ENCODE measurements at regions of chr4 and their contacts with region 1.

Region 1: DNA sequence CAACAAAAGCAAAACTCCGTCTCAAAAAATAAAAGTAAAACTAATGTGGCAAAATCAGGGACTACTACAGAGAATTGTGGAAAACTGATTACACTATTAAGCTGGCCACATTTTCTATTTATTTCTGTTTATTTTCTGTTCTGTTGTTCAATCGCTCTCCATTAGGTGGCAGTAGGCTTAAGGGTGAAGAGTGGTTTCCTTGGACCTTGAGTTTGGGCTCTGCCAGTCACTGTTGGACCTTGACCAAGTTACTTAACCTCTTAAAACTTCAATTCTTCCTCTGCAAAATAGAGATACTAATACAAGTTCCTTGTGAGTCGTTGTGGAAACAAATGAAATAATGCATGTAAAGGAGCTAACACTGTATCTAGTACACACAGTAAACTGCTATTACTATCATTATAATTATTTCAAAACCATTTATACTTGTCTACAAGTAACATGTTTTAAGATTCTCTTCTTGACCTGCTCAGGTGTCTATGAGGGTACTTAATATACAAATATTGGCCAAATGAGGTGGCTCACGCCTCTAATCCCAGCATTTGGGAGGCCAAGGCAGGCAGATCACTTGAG is 15.2 kb downstream of the HSD17B11 start:
- DNase-seq: no peak
- ATAC-seq: peak; percentile 60
- H3K4me3 Mint-ChIP-seq: no peak overlapping the region
- H3K27ac Mint-ChIP-seq: no peak overlapping the region
- H3K4me1 Mint-ChIP-seq: no peaks in the 10 kb centered on the region
- H3K27me3 Mint-ChIP-seq: no peaks in the 10 kb centered on the region
- CTCF ChIP-seq: peak; percentile 61

Region 2: GRCh38 chr4:87353592-87353991 is 22.2 kb before region 1 on chr4:
- CTCF ChIA-PET with region 1: interaction called, 10 read pairs
- POLR2A ChIA-PET with region 1: no interaction called
- intact Hi-C with region 1: no loop called
- DNase-seq: peak; percentile 55
- ATAC-seq: peak; percentile 49
- H3K4me3 Mint-ChIP-seq: no peak overlapping the region
- H3K27ac Mint-ChIP-seq: no peak overlapping the region
- H3K4me1 Mint-ChIP-seq: no peaks in the 10 kb centered on the region
- H3K27me3 Mint-ChIP-seq: no peaks in the 10 kb centered on the region
- CTCF ChIP-seq: peak; percentile 67

Region 3: DNA sequence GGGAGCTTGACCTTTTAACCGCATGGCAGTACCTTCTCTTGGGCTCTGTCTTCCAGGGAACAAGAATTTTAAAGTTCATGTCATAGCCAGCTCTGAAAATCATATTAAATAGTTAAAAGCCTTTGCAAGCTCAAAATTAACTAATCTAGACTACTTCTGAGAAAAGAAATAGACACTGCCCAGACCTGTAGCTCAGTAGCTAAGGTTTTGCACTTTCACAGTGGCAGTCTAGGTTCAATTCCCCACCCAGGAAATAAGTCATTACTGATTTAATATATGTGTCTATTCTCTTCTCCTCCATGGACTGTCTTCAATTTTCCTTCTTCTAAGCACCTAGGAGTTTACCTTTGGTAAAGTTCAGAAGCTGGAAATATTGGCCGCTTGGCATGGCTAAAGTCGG is 12.2 kb before region 1 on chr4:
- CTCF ChIA-PET with region 1: interaction called, 14 read pairs
- POLR2A ChIA-PET with region 1: no interaction called
- intact Hi-C with region 1: no loop called
- DNase-seq: no peak
- ATAC-seq: no peak
- H3K4me3 Mint-ChIP-seq: no peak overlapping the region
- H3K27ac Mint-ChIP-seq: no peak overlapping the region
- H3K4me1 Mint-ChIP-seq: no peaks in the 10 kb centered on the region
- H3K27me3 Mint-ChIP-seq: no peaks in the 10 kb centered on the region
- CTCF ChIP-seq: no peak

Region 4: DNA sequence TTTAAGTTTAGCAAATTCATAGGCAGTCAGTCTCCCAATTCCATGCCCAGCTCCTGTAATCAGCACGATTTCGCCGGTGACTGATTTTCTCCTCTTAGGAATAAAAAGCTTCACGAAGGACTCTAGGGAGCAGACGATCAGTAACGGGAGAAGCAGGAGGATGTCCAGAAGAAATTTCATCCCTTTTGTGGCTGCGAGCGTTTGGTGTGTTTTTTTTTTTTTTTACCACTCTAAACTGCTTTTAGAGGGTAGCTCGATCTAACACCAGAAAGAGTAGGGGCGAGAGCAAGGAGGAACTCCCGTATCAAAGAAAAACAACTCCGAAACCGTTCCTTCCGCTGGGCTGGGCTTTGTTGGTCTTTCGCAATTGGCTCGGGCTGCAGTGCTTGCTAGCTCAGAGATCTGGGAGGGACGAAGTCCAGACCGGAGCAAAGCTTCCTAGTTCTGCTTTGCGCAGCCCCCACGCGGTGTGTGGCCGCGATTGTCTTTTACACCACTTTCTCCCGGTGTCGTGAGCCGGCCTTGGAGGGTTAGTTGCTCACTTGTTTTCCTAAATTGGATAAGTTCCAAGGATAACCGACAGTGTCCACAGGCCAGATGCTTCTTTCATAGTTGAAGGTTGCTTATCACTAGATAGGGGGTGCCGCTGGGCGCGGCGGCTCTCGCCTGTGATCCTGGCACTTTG is 15.2 kb after region 1 on chr4 and contains the start of gene HSD17B11:
- CTCF ChIA-PET with region 1: interaction called, 17 read pairs
- POLR2A ChIA-PET with region 1: interaction called, 4 read pairs
- intact Hi-C with region 1: no loop called
- DNase-seq: peak; percentile 89
- ATAC-seq: peak; percentile 96
- H3K4me3 Mint-ChIP-seq: peak within 1 kb of the TSS; percentile 87
- H3K27ac Mint-ChIP-seq: peak within 1 kb of the TSS; percentile 89
- H3K4me1 Mint-ChIP-seq: peaks cover 47% of the 10 kb centered on the region
- H3K27me3 Mint-ChIP-seq: no peaks in the 10 kb centered on the region
- CTCF ChIP-seq: no peak
- total RNA-seq, gene HSD17B11: 21.2 to 21.7 TPM

Region 5: DNA sequence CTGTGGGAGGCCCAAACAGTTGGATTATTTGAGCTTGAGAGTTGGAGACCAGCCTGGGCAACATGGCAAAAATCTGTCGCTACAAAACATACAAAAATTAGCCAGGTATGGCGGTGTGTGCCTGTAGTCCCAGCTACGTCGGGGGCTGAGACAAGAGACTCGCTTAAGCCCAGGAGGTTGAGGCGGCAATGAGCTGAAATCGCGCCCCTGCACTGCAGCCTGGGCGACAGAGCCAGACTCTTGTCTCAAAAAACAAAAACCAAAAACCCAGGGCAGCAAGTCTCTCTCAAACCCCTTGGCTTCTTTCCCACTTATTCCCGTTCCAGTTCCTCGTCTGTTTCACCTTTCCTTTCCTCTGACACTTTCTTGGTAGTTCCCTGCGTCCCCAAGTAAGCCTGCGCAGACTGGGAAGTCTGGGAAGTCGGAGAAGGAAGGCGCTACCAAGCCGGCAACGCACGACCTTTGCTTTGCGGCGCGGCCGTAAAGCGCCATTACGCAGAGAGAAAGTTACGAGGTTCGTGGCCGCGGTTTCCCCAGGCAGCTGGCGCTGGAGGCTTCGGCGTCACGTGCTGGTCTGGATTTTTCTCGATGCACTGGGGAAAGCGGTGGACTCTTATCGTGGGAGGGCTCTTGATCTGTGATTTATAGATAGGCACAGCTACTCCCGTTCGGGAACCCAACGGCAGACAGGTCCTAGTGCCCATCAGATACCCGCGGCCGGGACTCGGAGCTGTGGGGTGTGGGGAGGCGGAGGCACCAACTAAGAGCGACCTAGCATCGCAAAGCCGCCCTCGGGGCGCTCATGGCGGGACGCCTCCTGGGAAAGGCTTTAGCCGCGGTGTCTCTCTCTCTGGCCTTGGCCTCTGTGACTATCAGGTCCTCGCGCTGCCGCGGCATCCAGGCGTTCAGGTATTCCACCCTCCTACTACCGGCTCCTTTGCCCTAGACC is 46.6 kb after region 1 on chr4 and contains the start of gene NUDT9:
- CTCF ChIA-PET with region 1: interaction called, 28 read pairs
- POLR2A ChIA-PET with region 1: interaction called, 4 read pairs
- intact Hi-C with region 1: no loop called
- DNase-seq: peak; percentile 94
- ATAC-seq: peak; percentile 91
- H3K4me3 Mint-ChIP-seq: peak within 1 kb of the TSS; percentile 92
- H3K27ac Mint-ChIP-seq: peak within 1 kb of the TSS; percentile 98
- H3K4me1 Mint-ChIP-seq: peaks cover 29% of the 10 kb centered on the region
- H3K27me3 Mint-ChIP-seq: no peaks in the 10 kb centered on the region
- CTCF ChIP-seq: no peak
- total RNA-seq, gene NUDT9: 11.9 to 12.3 TPM

Region 6: DNA sequence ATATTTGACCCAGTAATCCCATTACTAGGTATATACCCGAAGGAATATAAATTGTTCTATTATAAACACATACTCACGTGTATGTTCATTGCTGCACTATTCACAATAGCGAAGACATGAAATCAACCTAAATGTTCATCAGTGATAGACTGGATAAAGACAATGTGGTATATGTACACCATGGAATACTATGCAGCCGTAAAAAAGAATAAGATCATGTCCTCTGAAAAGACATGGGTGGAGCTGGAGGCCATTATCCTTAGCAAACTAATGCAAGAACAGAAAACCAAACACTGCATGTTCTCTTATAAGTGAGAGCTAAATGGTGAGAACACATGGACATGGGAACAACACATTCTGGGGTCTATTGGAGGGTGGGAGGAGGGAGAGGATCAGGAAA is 83.1 kb after region 1 on chr4:
- CTCF ChIA-PET with region 1: interaction called, 106 read pairs
- POLR2A ChIA-PET with region 1: no interaction called
- intact Hi-C with region 1: loop called (anchors 2 kb)
- DNase-seq: no peak
- ATAC-seq: no peak
- H3K4me3 Mint-ChIP-seq: no peak overlapping the region
- H3K27ac Mint-ChIP-seq: no peak overlapping the region
- H3K4me1 Mint-ChIP-seq: no peaks in the 10 kb centered on the region
- H3K27me3 Mint-ChIP-seq: no peaks in the 10 kb centered on the region
- CTCF ChIP-seq: no peak

Region 7: GRCh38 chr4:87465739-87466366 is 90.0 kb after region 1 on chr4:
- CTCF ChIA-PET with region 1: interaction called, 106 read pairs
- POLR2A ChIA-PET with region 1: no interaction called
- intact Hi-C with region 1: loop called (anchors 2 kb)
- DNase-seq: peak; percentile 7
- ATAC-seq: no peak
- H3K4me3 Mint-ChIP-seq: no peak overlapping the region
- H3K27ac Mint-ChIP-seq: no peak overlapping the region
- H3K4me1 Mint-ChIP-seq: peaks cover 2% of the 10 kb centered on the region
- H3K27me3 Mint-ChIP-seq: no peaks in the 10 kb centered on the region
- CTCF ChIP-seq: peak; percentile 92

Measured in activated CD8-positive, alpha-beta T cell treated with anti-CD3 and anti-CD28 coated beads for 36 hours (primary cell).